ENCODE measurements at regions of chr7 and their contacts with region 1.

Region 1: DNA sequence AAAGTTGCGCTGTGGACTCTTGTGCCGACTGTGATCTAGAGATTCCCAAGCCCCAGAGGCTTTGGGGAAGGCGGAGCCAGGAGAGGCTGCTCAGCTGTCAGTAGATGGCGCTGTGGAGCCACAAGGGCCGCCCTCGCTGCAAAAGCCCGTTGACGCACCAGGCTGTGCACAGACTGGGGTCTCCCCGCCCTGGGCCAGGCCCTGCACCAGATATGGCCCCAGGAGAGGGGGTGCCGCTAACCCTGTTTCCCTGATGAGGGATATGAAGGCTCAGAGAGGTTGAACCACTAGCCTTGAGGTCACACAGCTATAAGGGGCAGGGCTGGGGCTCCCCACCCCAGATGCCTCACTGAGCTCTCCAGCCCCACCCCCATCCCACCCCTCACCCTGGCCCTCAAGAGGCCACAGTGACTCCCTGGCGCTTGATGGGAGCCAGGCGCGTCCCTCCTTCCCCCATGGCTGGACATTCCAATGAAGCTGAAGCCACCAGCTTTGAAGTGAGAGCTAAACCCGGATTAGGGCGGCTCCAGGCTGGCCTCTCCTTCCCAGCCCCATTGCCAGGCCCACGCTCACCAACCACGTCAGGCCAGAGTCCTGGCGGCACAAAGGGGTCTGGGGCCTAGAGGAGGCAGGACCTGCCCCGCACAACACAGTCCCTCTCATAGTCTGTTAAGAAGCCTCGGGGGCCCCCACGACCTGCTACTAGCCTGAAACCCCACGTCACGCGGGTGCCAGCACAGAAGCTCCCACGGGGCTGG is 26.4 kb downstream of the MYL10 start:
- DNase-seq: peak; percentile 62 to 85 (median 79)
- H3K4me3 ChIP-seq: no peak overlapping the region
- H3K27ac ChIP-seq: no peak overlapping the region
- H3K4me1 ChIP-seq: no peaks in the 10 kb centered on the region
- H3K27me3 ChIP-seq: no peaks in the 10 kb centered on the region
- CTCF ChIP-seq: peak; percentile 74 to 91 (median 82)
- POLR2A ChIP-seq: no peak

Region 2: DNA sequence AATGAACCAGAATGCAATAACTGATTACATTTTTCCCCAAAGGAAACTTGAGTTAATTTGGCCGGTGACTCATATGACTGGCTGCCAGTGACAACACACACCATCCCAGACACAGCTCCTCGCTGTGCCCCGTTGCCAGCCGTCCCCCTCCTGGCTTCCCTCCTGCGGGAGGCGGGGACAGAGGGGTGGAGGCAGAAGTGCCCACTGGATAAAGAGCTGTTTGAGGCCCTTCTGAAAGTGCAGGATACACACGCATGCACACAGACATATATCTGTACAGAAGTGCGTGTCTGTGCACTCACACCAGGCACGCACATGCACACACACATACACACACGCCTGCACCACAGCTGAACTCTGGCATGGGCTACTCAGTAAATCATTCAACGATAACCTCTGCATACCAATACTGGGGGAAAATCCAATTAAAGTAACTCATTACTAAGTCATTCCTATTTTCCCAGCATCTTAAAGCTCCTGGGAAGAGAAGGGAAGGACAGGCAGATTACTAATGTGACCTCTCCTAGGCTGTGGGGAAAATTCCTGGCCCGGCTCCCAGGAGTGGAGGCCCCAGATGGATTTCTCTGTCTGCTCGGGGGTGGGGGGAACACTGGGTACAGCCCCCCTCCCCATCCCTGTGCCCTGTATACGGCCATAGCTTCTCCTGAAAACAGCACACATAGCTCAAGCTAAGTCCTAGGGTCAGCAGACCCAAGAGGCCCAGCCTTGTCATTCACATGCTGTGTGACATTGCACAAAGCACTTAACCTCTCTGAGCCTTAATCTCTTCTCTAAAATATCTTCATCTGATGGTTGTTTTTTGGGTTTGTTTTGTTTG is 78.7 kb after region 1 on chr7:
- intact Hi-C with region 1: loop called (anchors 5 to 10 kb)
- DNase-seq: peak; percentile 81 to 92 (median 89)
- H3K4me3 ChIP-seq: no peak overlapping the region
- H3K27ac ChIP-seq: peak overlapping the region in 3 of 5 donors; percentile 37 to 67 (median 63)
- H3K4me1 ChIP-seq: peaks cover 0 to 16% of the 10 kb centered on the region in 2 donors
- H3K27me3 ChIP-seq: no peaks in the 10 kb centered on the region
- CTCF ChIP-seq: no peak
- POLR2A ChIP-seq: no peak

Region 3: GRCh38 chr7:101804967-101805366 is 202.3 kb after region 1 on chr7:
- intact Hi-C with region 1: loop called (anchors 10 kb)
- DNase-seq: no peak
- H3K4me3 ChIP-seq: no peak overlapping the region
- H3K27ac ChIP-seq: no peak overlapping the region
- H3K4me1 ChIP-seq: no peaks in the 10 kb centered on the region
- H3K27me3 ChIP-seq: peaks cover 27% of the 10 kb centered on the region
- CTCF ChIP-seq: peak in 1 of 6 experiments; percentile 9
- POLR2A ChIP-seq: no peak

Region 4: DNA sequence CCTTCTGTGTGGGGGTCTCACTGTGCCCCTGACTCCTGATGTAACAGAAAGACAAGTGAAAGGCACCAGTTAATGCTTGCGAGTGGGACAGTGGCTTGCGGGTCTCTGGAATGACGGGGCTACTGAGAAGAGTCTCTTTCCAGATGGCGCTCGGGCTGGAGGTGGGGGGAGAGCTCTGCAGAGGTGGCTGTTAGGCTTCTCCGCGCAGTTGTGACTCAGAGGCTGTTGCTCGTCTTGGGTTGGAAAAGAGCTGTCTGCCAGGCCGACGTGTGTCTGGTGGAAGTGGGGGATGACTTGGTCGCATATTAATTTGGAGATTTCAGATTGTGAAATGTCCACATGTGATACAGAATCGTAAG is 656.1 kb after region 1 on chr7:
- intact Hi-C with region 1: no loop called
- DNase-seq: no peak
- H3K4me3 ChIP-seq: no peak overlapping the region
- H3K27ac ChIP-seq: no peak overlapping the region
- H3K4me1 ChIP-seq: no peaks in the 10 kb centered on the region
- H3K27me3 ChIP-seq: no peaks in the 10 kb centered on the region
- CTCF ChIP-seq: no peak
- POLR2A ChIP-seq: no peak

Region 5: GRCh38 chr7:102272075-102272917 is 669.6 kb after region 1 on chr7:
- intact Hi-C with region 1: loop called in 1 of 2 experiments (anchors 5 kb)
- DNase-seq: peak; percentile 77 to 92 (median 85)
- H3K4me3 ChIP-seq: no peak overlapping the region
- H3K27ac ChIP-seq: no peak overlapping the region
- H3K4me1 ChIP-seq: peaks cover 0 to 4% of the 10 kb centered on the region in 2 donors
- H3K27me3 ChIP-seq: no peaks in the 10 kb centered on the region
- CTCF ChIP-seq: peak; percentile 85 to 94 (median 93)
- POLR2A ChIP-seq: no peak